BJ (cell line): ENCODE measurements at regions of chr12 and their contacts with region 1.

Region 1: GRCh38 chr12:121811434-121812319 is 7.9 kb downstream of the SETD1B start:
- DNase-seq: no peak
- H3K4me3 ChIP-seq: peak overlapping the region; percentile 77
- H3K27me3 ChIP-seq: no peaks in the 10 kb centered on the region
- CTCF ChIP-seq: peak; percentile 54

Region 2: DNA sequence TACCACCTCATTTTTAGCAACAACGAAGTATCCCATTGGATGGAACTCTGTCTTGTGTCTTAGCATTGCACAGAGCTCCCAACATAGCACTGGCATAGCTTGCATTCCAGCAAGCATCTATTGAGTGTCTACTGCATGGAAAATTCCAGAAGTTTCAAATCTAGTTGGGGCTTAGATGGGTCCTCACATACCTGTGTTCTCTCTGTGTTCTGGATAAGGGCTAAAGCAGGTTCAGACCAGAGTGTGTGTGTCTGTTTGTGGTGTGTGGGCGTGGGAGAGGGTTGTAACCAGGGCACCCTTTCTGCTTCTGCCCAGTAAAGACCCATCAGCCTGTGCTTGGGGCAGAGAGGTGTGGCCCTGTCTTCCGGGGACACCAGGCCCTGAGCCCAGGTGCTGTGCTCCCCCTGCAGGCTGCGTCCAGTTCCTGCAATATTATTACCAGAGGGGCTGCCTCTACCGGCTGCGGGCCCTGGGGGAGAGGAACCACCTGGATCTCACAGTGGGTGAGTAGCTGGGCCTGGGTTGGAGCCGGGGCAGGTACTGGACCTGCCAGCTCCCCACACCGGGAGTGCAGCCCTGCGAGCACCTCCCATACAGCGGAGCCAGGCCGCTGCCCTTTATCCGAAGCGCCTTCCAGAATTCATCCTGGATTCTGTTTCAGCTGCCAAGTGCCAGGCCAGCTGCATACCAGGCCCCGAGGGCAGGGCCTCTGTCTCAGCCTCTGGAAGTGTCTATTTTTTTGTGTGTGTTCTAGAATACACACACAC is 38.5 kb before region 1 on chr12:
- CTCF ChIA-PET with region 1: interaction called, 21 read pairs
- POLR2A ChIA-PET with region 1: interaction called, 17 read pairs
- DNase-seq: no peak
- H3K4me3 ChIP-seq: no peak overlapping the region
- H3K27me3 ChIP-seq: no peaks in the 10 kb centered on the region
- CTCF ChIP-seq: peak; percentile 90

Region 3: DNA sequence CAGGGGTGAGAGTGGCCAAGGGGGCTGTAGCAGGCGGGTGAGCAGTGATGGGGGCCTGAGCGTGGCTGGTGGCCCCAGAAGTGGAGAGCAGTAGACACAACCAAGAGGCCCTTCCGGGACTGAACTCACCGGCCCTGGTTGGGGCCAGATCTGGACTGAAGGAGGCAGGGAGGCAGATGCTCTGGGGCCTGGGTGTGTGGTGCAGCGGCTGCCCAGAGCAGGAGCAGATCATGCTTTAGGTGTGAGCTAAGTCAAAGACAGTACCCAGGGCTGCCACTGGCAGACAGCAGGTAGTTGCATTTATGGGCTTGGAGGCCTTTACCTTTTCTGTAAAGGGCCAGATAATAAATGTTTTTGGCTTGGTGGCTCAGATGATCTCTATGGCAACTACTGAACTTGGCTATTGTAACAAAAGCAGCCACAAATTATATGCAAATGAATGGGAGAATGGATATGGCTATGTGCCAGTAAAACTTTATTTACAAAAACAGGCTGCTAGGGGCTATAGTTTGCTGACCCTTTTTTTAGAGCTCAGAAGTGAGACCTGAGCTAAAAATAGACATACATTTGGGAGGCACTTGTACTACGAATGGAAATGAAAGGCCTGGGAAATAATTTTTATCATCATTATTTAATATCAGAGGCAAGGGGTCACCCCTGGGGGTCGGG is 17.7 kb after region 1 on chr12:
- CTCF ChIA-PET with region 1: interaction called, 26 read pairs
- POLR2A ChIA-PET with region 1: no interaction called
- DNase-seq: no peak
- H3K4me3 ChIP-seq: no peak overlapping the region
- H3K27me3 ChIP-seq: no peaks in the 10 kb centered on the region
- CTCF ChIP-seq: no peak

Region 4: GRCh38 chr12:121888478-121889266 is 77.0 kb after region 1 on chr12 and contains the start of gene PSMD9:
- CTCF ChIA-PET with region 1: interaction called, 42 read pairs
- POLR2A ChIA-PET with region 1: no interaction called
- DNase-seq: peak; percentile 85
- H3K4me3 ChIP-seq: peak within 1 kb of the TSS; percentile 77
- H3K27me3 ChIP-seq: no peaks in the 10 kb centered on the region
- CTCF ChIP-seq: peak; percentile 89
- polyA plus RNA-seq, gene PSMD9: 93.2 and 130 TPM in 2 replicates